Activated naive CD4-positive, alpha-beta T cell treated with anti-CD3 and anti-CD28 coated beads for 36 hours (primary cell): ENCODE measurements at regions of chr12 and their contacts with region 1.

Region 1: GRCh38 chr12:53701518-53702260 is 25.6 kb downstream of the CALCOCO1 start:
- DNase-seq: peak; percentile 86
- H3K4me3 Mint-ChIP-seq: no peak overlapping the region
- H3K27ac Mint-ChIP-seq: no peak overlapping the region
- H3K4me1 Mint-ChIP-seq: peaks cover 7% of the 10 kb centered on the region
- H3K27me3 Mint-ChIP-seq: peaks cover 74% of the 10 kb centered on the region

Region 2: GRCh38 chr12:53738406-53739213 is 36.9 kb after region 1 on chr12:
- CTCF ChIA-PET with region 1: interaction called, 236 read pairs
- intact Hi-C with region 1: loop called (anchors 1 kb)
- DNase-seq: peak; percentile 52
- H3K4me3 Mint-ChIP-seq: peak overlapping the region; percentile 49
- H3K27ac Mint-ChIP-seq: no peak overlapping the region
- H3K4me1 Mint-ChIP-seq: peaks cover 19% of the 10 kb centered on the region
- H3K27me3 Mint-ChIP-seq: peaks cover 15% of the 10 kb centered on the region

Region 3: GRCh38 chr12:53757095-53757770 is 55.5 kb after region 1 on chr12:
- CTCF ChIA-PET with region 1: interaction called, 16 read pairs
- intact Hi-C with region 1: no loop called
- DNase-seq: peak; percentile 92
- H3K4me3 Mint-ChIP-seq: peak overlapping the region; percentile 44
- H3K27ac Mint-ChIP-seq: no peak overlapping the region
- H3K4me1 Mint-ChIP-seq: peaks cover 7% of the 10 kb centered on the region
- H3K27me3 Mint-ChIP-seq: peaks cover 28% of the 10 kb centered on the region